Testis (tissue), 5 donors: ENCODE measurements at regions of chr11 and their contacts with region 1.

Region 1: GRCh38 chr11:20127671-20128527 is 32.4 kb downstream of the DBX1 start:
- DNase-seq: peak; percentile 84
- H3K4me3 ChIP-seq: no peak overlapping the region
- H3K27ac ChIP-seq: no peak overlapping the region
- H3K4me1 ChIP-seq: peaks cover 5% of the 10 kb centered on the region
- H3K27me3 ChIP-seq: no peaks in the 10 kb centered on the region
- CTCF ChIP-seq: peak; percentile 74 to 77 (median 76)
- POLR2A ChIP-seq: no peak

Region 2: DNA sequence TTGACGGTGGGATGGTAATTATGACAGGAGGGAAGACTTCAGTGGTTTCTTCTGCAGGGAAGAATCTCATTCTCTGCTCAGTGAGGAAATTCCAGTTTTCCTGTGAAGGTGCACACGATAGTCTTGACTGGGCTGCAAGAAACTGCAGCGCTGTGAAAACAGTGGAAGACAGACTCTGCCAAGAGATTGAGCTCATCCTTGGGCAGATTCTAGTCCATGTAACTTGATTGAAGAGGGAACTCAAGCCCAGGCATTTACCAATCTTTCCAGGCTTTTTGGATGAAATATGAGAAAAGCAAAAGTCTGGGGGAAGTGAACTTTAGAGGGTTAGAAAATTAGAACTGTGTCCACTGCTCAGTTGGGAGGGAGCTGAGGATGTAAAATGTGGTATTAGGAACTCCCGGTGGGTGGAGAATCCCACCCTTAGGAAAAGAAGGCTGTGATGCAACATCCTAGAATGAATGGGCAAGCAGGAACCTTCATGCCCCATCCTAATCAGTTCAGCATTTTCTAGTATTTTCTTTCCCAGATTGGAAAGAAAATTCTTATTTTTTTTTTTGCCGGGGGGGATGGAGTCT is 180.3 kb before region 1 on chr11:
- intact Hi-C with region 1: loop called (anchors 10 kb)
- DNase-seq: no peak
- H3K4me3 ChIP-seq: no peak overlapping the region
- H3K27ac ChIP-seq: no peak overlapping the region
- H3K4me1 ChIP-seq: no peaks in the 10 kb centered on the region
- H3K27me3 ChIP-seq: no peaks in the 10 kb centered on the region
- CTCF ChIP-seq: no peak
- POLR2A ChIP-seq: no peak

Region 3: DNA sequence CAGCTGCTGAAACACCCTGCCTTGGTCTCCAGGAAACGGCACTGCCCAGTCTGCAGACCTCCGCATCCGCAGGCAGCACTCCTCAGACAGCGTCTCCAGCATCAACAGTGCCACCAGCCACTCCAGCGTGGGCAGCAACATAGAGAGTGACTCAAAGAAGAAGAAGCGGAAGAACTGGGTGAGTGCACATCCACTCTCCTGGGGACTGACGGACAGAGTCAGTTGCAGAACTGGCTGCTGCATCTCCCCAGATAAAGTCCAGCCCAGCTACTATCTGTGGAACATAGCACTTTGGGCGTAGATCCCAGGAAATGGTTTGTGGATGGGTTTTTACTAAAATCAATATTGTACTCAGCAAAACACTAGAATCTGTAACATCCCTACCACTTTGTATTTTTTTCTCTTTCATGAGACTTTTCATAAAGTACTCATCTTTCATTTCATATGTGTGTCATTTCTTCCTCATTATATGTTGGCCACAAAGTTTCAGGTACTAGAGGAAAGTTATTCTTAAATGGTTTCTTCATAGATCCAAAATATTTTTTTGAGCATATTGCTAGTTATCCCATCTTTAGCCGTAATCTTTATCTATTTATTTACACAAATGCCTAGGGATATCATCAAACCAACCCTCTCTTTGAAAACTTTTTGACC is 47.7 kb before region 1 on chr11:
- intact Hi-C with region 1: no loop called
- DNase-seq: no peak
- H3K4me3 ChIP-seq: no peak overlapping the region
- H3K27ac ChIP-seq: no peak overlapping the region
- H3K4me1 ChIP-seq: no peaks in the 10 kb centered on the region
- H3K27me3 ChIP-seq: no peaks in the 10 kb centered on the region
- CTCF ChIP-seq: no peak
- POLR2A ChIP-seq: no peak

Region 4: GRCh38 chr11:20158597-20159257 is 30.8 kb after region 1 on chr11:
- intact Hi-C with region 1: no loop called
- DNase-seq: peak; percentile 73
- H3K4me3 ChIP-seq: no peak overlapping the region
- H3K27ac ChIP-seq: no peak overlapping the region
- H3K4me1 ChIP-seq: peaks cover 9% of the 10 kb centered on the region
- H3K27me3 ChIP-seq: no peaks in the 10 kb centered on the region
- CTCF ChIP-seq: no peak
- POLR2A ChIP-seq: no peak

Region 5: GRCh38 chr11:20355221-20356219 is 227.6 kb after region 1 on chr11:
- intact Hi-C with region 1: loop called (anchors 10 kb)
- DNase-seq: peak; percentile 49
- H3K4me3 ChIP-seq: no peak overlapping the region
- H3K27ac ChIP-seq: no peak overlapping the region
- H3K4me1 ChIP-seq: no peaks in the 10 kb centered on the region
- H3K27me3 ChIP-seq: no peaks in the 10 kb centered on the region
- CTCF ChIP-seq: peak; percentile 20 to 45 (median 35)
- POLR2A ChIP-seq: no peak